Panc1 (cell line): ENCODE measurements at regions of chr2 and their contacts with region 1.

Region 1: GRCh38 chr2:233353769-233354499 is at the start of gene DGKD:
- DNase-seq: no peak
- ATAC-seq: peak; percentile 69
- H3K4me3 ChIP-seq: peak within 1 kb of the TSS; percentile 83 to 87
- H3K27ac ChIP-seq: peak within 1 kb of the TSS; percentile 90
- H3K4me1 ChIP-seq: peaks cover 63% of the 10 kb centered on the region
- H3K27me3 ChIP-seq: no peaks in the 10 kb centered on the region
- CTCF ChIP-seq: peak; percentile 80
- total RNA-seq, gene DGKD: 89.0 TPM

Region 2: DNA sequence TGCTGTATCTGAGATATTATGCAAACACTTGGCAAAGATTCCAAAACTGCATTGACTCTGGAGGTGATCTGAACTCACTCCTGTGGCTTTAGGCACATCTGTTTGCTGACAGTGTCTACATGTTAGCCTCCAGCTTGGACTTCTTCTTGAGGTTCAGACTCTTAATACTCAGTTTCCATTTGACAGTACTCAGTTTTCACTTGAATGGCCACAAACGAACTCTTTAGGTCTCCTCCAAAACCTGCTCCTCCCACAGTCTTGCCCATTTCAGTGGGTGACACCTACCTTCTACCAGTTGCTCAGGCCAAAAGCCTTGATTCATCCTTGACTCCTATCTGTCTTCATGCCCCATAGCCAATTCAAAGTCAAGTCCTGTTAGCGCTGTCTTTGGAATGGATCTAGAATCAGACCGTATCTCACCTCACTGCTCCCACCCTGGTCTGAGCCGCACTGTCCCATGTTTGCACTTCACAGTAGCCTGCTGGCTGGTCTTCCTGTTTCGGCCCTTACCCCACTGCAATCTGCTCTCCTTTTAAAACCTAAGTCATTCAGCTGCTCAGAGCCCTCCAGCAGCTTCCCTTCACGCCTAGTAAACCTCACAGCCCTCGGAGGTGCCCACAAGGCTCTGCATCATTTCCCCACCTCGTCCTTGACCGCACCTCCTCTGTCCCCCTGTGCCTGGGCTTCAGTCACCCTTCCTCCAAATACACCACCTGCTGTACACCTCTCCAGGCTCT is 91.9 kb before region 1 on chr2:
- CTCF ChIA-PET with region 1: no interaction called
- POLR2A ChIA-PET with region 1: no interaction called
- in situ Hi-C with region 1: no loop called
- intact Hi-C with region 1: no loop called
- DNase-seq: no peak
- ATAC-seq: no peak
- H3K4me3 ChIP-seq: no peak overlapping the region
- H3K27ac ChIP-seq: no peak overlapping the region
- H3K4me1 ChIP-seq: no peaks in the 10 kb centered on the region
- H3K27me3 ChIP-seq: no peaks in the 10 kb centered on the region
- CTCF ChIP-seq: no peak

Region 3: GRCh38 chr2:233387667-233388528 is 34.0 kb after region 1 on chr2:
- CTCF ChIA-PET with region 1: no interaction called
- POLR2A ChIA-PET with region 1: no interaction called
- in situ Hi-C with region 1: no loop called
- intact Hi-C with region 1: no loop called
- DNase-seq: no peak
- ATAC-seq: no peak
- H3K4me3 ChIP-seq: no peak overlapping the region
- H3K27ac ChIP-seq: no peak overlapping the region
- H3K4me1 ChIP-seq: peaks cover 3% of the 10 kb centered on the region
- H3K27me3 ChIP-seq: no peaks in the 10 kb centered on the region
- CTCF ChIP-seq: no peak

Region 4: DNA sequence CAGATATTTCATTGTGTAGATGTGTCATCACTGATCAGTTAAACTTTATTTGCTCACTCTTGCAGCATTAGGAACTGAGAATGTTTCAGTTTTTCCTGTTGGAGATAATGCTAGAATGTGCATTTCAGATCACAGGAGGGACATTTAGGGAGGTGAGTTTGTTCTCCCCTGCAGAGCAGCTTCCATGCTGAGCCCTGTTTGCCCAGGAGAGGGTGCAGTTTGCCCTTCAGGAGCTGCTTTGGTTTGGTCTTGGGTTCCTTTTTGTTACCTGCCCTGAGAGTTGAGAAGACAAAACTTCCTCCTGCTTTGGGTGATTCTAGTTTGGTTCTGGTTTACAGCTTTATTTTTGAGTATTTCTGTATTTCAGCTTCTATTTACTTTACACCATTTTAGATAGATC is 50.3 kb after region 1 on chr2:
- CTCF ChIA-PET with region 1: no interaction called
- POLR2A ChIA-PET with region 1: no interaction called
- in situ Hi-C with region 1: loop called (anchors 5 kb)
- intact Hi-C with region 1: no loop called
- DNase-seq: no peak
- ATAC-seq: 0 out of 2 replicates have a peak, but pooled peaks have one; percentile 58
- H3K4me3 ChIP-seq: no peak overlapping the region
- H3K27ac ChIP-seq: no peak overlapping the region
- H3K4me1 ChIP-seq: no peaks in the 10 kb centered on the region; the same call in 1 of the 2 replicates
- H3K27me3 ChIP-seq: no peaks in the 10 kb centered on the region
- CTCF ChIP-seq: peak; percentile 80

Region 5: GRCh38 chr2:233443468-233444183 is 89.7 kb after region 1 on chr2:
- CTCF ChIA-PET with region 1: interaction called, 3 read pairs
- POLR2A ChIA-PET with region 1: no interaction called
- in situ Hi-C with region 1: no loop called
- intact Hi-C with region 1: loop called (anchors 10 kb)
- DNase-seq: no peak
- ATAC-seq: peak; percentile 81
- H3K4me3 ChIP-seq: no peak overlapping the region
- H3K27ac ChIP-seq: no peak overlapping the region
- H3K4me1 ChIP-seq: peaks cover 11% of the 10 kb centered on the region
- H3K27me3 ChIP-seq: no peaks in the 10 kb centered on the region
- CTCF ChIP-seq: peak; percentile 92

Region 6: DNA sequence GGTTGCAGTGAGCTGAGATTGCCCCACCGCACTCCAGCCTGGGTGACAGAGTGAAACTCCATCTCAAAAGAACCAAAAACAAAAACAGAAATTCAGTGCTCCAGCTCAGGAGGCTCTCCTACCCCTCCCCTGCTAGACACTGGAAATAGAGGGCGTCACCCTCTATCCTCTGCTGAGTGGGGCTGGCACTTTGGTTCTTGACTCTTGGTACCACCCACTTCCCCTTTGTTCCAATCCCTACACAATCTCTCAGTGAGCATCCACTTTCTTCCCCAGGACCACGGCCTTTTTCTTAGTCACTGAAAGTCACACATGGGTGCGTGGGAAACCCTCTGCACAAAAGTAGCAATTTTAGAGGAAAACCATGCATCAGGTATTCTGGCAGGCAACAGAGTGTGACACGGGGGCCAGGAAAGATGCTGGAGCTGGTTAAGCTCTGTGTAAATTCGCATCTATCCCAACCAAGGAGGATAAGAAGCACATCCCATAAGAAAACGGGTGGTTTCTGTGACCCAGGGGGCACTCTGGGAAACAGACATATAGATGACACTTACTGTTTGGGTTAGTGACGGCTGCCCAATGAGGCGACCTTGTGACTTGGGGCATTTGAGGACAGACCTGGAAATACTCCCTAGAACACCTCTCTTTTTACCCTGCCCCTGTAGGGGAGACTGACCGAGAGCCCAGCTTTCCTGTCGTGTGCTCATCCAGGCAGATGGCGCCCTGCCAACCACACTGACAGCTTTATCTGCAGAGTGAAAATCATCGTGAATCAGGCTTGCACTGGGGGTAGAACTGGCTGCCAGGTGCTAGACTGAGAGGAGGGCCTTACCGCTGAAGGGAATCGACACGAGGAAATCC is 492.7 kb after region 1 on chr2:
- CTCF ChIA-PET with region 1: no interaction called
- POLR2A ChIA-PET with region 1: interaction called, 13 read pairs
- in situ Hi-C with region 1: no loop called
- intact Hi-C with region 1: no loop called
- DNase-seq: no peak
- ATAC-seq: no peak
- H3K4me3 ChIP-seq: no peak overlapping the region
- H3K27ac ChIP-seq: peak overlapping the region; percentile 45; the same call in 1 of the 2 replicates
- H3K4me1 ChIP-seq: peaks cover 11% of the 10 kb centered on the region
- H3K27me3 ChIP-seq: no peaks in the 10 kb centered on the region
- CTCF ChIP-seq: no peak

Region 7: DNA sequence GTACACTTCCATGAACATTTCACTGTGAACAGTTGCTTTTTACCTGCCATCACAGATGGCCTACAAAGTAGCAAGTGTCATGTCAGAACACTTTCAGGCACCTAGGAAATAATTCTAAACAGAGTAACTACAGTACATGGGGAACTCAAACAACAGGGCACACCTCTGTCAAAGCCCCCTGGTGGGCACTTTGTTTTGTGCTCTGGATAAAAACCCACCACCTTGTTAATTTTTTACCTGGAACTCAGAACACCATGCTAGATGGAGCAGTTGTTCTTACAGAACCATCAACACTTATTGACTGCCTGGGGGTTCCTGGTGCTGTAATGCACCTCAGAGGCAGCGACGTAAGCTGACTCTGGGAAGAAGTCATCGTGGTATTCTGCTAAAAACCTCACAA is 511.9 kb after region 1 on chr2:
- CTCF ChIA-PET with region 1: no interaction called
- POLR2A ChIA-PET with region 1: no interaction called
- in situ Hi-C with region 1: no loop called
- intact Hi-C with region 1: no loop called
- DNase-seq: no peak
- ATAC-seq: no peak
- H3K4me3 ChIP-seq: no peak overlapping the region
- H3K27ac ChIP-seq: 0 out of 2 replicates have a peak overlapping the region, but pooled peaks have one; percentile 23
- H3K4me1 ChIP-seq: peaks cover 3% of the 10 kb centered on the region; the same call in 1 of the 2 replicates
- H3K27me3 ChIP-seq: no peaks in the 10 kb centered on the region
- CTCF ChIP-seq: peak; percentile 44